Activated CD8-positive, alpha-beta memory T cell treated with anti-CD3 and anti-CD28 coated beads, Interleukin-2, amount 10 ng/mL, durations not matched to agents 7 days and 5 days (primary cell): ENCODE measurements at regions of chr17 and their contacts with region 1.

Region 1: DNA sequence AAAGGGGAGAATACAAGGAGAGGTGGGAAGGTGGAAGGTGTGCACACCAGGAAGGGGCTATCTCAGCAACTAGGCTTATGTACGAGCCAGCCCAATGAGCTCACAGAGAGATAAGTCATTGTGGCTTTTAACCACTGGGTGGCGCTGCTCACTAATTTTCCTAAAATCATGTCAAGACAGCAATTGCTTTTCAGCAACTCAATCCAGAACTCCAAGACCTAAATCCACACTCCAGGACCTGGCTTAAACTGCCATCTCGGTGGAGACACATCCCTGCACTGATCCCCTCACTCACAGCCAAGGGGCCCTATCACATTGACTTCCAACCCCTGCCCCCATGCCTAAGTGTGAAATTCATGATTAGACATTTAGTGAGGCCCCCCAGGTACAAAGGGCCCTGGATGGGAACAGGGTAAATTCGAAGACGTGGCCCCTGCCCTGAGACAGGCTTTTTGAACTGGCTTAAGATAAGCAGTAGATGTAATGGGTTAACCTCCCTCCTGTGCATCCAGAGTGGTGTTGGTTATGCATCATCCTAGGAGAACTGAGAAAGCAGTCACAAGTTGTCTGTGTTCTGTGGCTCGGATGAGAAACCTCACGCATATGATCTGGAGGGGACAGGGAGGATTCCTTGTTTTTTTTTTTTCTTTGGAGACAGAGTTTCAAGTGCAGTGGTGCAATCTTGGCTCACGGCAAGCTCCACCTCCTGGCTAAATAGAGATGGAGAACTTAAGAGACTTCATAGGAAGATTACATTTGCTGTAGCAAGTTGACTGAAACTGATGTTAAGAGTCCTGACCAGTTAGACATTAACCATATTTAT is 11.5 kb downstream of the CCL16 start:
- DNase-seq: peak; percentile 89
- ATAC-seq: peak; percentile 81
- H3K4me3 Mint-ChIP-seq: no peak overlapping the region
- H3K27ac Mint-ChIP-seq: peak overlapping the region; percentile 44
- H3K4me1 Mint-ChIP-seq: peaks cover 27% of the 10 kb centered on the region
- H3K27me3 Mint-ChIP-seq: no peaks in the 10 kb centered on the region

Region 2: GRCh38 chr17:35947156-35947585 is 22.6 kb before region 1 on chr17:
- CTCF ChIA-PET with region 1: interaction called, 17 read pairs
- DNase-seq: peak; percentile 78
- ATAC-seq: peak; percentile 91
- H3K4me3 Mint-ChIP-seq: no peak overlapping the region
- H3K27ac Mint-ChIP-seq: no peak overlapping the region
- H3K4me1 Mint-ChIP-seq: peaks cover 13% of the 10 kb centered on the region
- H3K27me3 Mint-ChIP-seq: no peaks in the 10 kb centered on the region

Region 3: GRCh38 chr17:35981908-35982330 is 12.2 kb after region 1 on chr17:
- CTCF ChIA-PET with region 1: interaction called, 15 read pairs
- DNase-seq: no peak
- ATAC-seq: no peak
- H3K4me3 Mint-ChIP-seq: no peak overlapping the region
- H3K27ac Mint-ChIP-seq: no peak overlapping the region
- H3K4me1 Mint-ChIP-seq: peaks cover 11% of the 10 kb centered on the region
- H3K27me3 Mint-ChIP-seq: no peaks in the 10 kb centered on the region

Region 4: DNA sequence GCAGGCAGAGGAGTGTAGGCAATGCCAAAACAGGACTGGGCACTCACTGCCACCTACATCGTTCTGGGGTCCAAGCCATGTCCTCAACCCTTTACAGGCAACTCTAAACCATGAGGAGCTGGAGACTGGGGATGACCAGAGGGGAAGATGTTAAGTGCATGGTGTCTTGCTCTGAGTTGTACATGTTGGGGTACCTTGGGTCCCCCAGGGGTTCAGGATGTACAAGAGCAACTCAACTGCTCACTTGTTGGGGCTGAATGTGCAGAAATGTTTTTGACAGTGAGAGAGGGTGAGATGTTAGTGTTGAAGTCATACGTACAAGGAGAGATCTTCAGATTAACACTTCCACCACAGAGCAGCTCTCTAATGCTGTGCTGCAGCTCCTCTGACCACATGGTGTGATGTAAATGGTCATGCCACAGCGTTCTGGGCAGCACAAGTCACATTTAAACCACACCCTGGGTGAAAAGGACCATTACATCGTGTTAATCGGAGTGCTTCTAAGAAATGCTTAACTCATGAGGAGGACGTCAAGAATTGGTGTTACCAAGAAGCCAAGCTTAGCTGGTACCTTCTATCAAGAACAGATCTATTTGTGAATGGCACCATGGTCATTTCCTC is 96.7 kb after region 1 on chr17:
- CTCF ChIA-PET with region 1: interaction called, 103 read pairs
- DNase-seq: peak; percentile 88
- ATAC-seq: peak; percentile 87
- H3K4me3 Mint-ChIP-seq: peak overlapping the region; percentile 3
- H3K27ac Mint-ChIP-seq: peak overlapping the region; percentile 89
- H3K4me1 Mint-ChIP-seq: peaks cover 54% of the 10 kb centered on the region
- H3K27me3 Mint-ChIP-seq: peaks cover 3% of the 10 kb centered on the region

Region 5: DNA sequence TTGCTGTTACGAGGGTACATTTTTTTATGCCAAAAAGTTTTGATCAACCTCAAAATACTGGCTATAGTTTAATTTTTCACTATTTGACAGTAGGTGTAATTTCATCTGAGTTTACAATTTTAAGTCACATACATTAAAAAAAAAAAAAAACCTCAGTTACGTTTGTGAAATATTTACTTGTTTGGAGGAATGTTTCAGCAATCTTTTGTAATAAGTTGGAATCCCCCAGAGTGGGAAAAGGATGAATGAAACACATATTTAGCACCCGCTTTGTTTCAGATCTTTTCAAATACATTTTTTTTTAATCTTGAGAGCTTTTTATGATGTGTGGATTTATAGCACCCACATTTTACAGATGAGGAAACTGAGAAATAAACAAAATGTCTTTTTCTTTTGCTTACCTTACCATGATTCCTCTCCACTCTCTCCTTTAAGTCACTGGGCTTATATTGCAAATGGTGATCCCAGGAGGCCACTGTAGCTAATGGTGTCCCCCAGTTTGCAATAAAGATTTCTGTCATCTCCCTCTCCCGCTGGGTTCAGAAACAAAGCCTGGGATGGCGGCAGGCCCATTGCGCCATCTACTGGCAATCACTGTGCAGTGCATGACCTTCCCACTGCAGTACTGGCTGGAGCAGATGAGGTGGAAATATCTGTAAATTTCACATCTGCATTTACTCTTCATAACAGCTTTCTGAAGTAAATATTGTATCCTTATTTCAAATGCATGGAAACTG is 179.0 kb after region 1 on chr17:
- CTCF ChIA-PET with region 1: interaction called, 465 read pairs
- DNase-seq: peak; percentile 81
- ATAC-seq: peak; percentile 95
- H3K4me3 Mint-ChIP-seq: peak overlapping the region; percentile 50
- H3K27ac Mint-ChIP-seq: peak overlapping the region; percentile 67
- H3K4me1 Mint-ChIP-seq: peaks cover 44% of the 10 kb centered on the region
- H3K27me3 Mint-ChIP-seq: peaks cover 17% of the 10 kb centered on the region